Sigmoid colon (tissue), 7 donors: ENCODE measurements at regions of chr13 and their contacts with region 1.

Region 1: DNA sequence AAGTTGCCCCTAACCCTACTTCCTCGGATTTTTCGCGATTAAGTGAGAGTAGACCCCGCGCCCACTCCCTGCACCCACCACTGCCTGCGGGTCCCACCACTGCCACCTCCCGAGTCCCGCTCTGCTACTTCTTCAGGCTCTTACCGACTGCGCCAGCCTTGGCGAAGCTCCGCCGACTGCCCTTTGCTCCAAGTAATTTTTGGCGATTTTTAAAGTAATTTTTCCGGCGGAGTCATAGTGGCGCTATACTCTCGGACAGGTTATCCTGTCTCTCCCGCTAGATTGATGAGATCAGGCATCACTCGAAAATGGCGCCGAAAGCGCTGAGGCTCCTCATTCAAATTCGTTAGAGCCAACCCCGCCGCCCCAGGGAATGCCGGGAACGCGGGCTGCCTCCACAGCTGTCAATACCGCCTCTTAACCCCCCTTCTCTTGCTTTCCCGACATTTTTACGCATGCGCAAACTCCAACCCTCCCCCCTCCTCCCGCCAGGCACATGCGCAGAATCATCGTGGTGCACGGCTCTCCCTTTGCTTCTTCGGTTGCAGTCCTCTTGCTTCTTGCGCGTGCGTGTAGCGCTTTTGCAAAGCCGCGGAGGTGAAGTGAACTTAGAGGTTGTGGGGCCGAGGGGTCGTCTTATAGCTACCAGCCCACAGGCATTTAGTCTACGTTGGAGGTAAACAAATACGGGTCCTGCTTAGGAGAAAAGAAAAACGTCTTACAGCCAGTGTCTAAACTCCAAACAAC is 66.6 kb downstream of the KCNRG start:
- DNase-seq: peak; percentile 99
- H3K4me3 ChIP-seq: peak overlapping the region; percentile 75 to 88 (median 79)
- H3K27ac ChIP-seq: peak overlapping the region; percentile 89 to 96 (median 91)
- H3K4me1 ChIP-seq: peaks cover 0 to 59% (median 27%) of the 10 kb centered on the region in 4 donors
- H3K27me3 ChIP-seq: peaks cover 0 to 9% (median 0%) of the 10 kb centered on the region in 3 donors
- CTCF ChIP-seq: no peak
- EP300 ChIP-seq: peak in 2 of 4 donors; percentile 4 to 7
- POLR2A ChIP-seq: peak; percentile 7 to 8

Region 2: GRCh38 chr13:49667773-49668172 is 414.1 kb before region 1 on chr13:
- intact Hi-C with region 1: no loop called
- DNase-seq: no peak
- H3K4me3 ChIP-seq: no peak overlapping the region
- H3K27ac ChIP-seq: no peak overlapping the region
- H3K4me1 ChIP-seq: peaks cover 0 to 6% (median 0%) of the 10 kb centered on the region in 4 donors
- H3K27me3 ChIP-seq: no peaks in the 10 kb centered on the region
- CTCF ChIP-seq: no peak
- EP300 ChIP-seq: no peak
- POLR2A ChIP-seq: no peak

Region 3: DNA sequence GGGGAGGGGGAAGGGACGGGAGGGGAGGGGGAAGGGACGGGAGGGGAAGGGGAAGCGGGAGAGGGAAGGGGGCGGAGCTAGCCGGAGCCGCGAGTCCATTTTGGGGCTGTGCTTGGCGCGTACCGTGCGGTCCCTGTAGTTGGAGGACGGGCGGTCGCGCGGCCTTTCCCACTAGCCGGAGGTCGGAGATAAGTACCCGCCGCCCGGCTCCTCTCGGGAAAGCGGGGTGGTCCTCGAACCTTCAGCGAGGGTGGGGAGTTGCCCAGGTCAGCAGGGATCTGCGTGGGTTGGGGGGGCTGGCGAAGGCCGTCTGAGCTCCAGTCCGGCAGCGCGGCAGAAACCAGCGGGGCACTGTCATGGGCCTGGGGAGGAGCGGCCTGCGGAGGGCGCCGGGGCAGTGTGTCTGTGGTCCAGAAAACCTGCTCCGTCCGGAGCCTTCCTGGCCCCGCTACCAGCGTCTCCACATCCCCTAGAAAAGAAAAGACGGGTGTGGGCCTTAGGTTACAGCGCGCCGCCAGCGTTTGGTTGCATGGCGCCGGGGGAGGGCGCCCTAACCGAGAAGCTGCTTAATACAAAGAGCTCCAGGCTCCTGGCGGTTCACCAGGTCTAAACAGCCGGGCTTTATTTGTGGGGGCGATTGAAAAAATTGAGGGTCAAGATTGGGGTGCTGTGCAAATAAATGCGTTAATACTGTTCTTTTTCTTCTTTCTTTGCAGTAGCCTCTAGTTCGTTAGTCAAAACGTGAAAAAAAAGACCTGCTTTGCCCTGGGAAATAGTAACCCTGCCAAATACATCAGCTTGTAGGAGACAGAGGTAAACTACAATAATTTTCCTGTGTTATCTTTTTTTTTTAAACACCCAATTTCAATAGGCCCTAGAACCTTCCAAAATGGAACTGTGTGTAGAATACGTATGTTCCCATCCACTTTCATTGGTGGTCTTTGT is 84.6 kb before region 1 on chr13 and contains the start of gene TRIM13:
- intact Hi-C with region 1: loop called (anchors 1 kb)
- DNase-seq: peak; percentile 95
- H3K4me3 ChIP-seq: peak within 1 kb of the TSS; percentile 78 to 89 (median 86)
- H3K27ac ChIP-seq: peak within 1 kb of the TSS; percentile 99 to 100 (median 99)
- H3K4me1 ChIP-seq: peaks cover 0 to 51% (median 46%) of the 10 kb centered on the region in 4 donors
- H3K27me3 ChIP-seq: no peaks in the 10 kb centered on the region
- CTCF ChIP-seq: peak; percentile 34 to 76 (median 64)
- EP300 ChIP-seq: no peak
- POLR2A ChIP-seq: peak; percentile 47 to 58
- total RNA-seq, gene TRIM13: 17.1 to 25.0 (median 22.9) TPM

Region 4: DNA sequence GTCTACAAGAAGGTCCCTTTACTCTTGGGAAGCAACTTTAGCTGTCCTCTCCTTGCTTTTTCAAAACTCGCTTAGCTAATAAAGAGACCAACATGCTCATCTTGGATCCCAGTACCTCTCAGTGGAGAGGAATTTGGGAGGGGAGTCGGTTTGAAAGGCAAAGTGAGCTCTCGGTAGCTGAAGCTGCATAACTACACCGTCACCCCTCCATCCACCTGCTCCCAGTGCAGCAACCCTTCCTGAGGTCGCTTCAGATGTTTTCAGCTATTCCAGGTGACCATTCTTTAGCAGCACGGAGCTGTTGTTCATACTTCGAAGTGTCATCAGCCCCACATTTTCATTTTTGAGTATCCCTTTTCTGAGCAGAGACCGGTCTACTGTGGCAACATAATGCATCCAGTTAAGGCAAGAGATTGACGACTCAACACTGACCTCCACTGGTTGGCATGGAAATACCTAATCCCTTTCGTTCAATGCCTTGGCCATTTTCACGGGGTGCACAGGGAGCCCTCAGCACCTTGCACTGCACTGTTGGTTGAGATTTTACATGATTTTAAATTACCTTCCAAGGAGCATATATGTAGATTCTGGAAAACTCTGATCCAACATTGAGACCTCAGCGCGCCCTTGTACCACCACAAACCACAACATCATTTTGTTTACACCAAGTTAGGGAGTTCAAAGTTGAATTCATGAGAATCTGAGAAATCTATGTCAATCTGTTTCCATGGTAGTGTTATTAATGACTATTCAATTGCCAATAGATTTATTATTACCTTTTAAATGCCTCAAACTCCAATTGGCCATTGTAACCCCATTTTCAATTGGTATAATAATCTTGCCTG is 719.5 kb after region 1 on chr13:
- intact Hi-C with region 1: loop called (anchors 5 kb)
- DNase-seq: no peak
- H3K4me3 ChIP-seq: no peak overlapping the region
- H3K27ac ChIP-seq: peak overlapping the region in 1 of 4 donors; percentile 11
- H3K4me1 ChIP-seq: peaks cover 0 to 14% (median 6%) of the 10 kb centered on the region in 4 donors
- H3K27me3 ChIP-seq: no peaks in the 10 kb centered on the region
- CTCF ChIP-seq: peak; percentile 48 to 54 (median 49)
- EP300 ChIP-seq: no peak
- POLR2A ChIP-seq: no peak

Region 5: GRCh38 chr13:50911937-50912795 is 830.3 kb after region 1 on chr13:
- intact Hi-C with region 1: loop called (anchors 2 kb)
- DNase-seq: peak; percentile 91
- H3K4me3 ChIP-seq: no peak overlapping the region
- H3K27ac ChIP-seq: peak overlapping the region; percentile 55 to 91 (median 87)
- H3K4me1 ChIP-seq: peaks cover 0 to 42% (median 34%) of the 10 kb centered on the region in 4 donors
- H3K27me3 ChIP-seq: no peaks in the 10 kb centered on the region
- CTCF ChIP-seq: peak; percentile 54 to 81 (median 70)
- EP300 ChIP-seq: no peak
- POLR2A ChIP-seq: no peak